Dorsolateral prefrontal cortex (tissue), 120 donors: ENCODE measurements at regions of chrX and their contacts with region 1.

Region 1: DNA sequence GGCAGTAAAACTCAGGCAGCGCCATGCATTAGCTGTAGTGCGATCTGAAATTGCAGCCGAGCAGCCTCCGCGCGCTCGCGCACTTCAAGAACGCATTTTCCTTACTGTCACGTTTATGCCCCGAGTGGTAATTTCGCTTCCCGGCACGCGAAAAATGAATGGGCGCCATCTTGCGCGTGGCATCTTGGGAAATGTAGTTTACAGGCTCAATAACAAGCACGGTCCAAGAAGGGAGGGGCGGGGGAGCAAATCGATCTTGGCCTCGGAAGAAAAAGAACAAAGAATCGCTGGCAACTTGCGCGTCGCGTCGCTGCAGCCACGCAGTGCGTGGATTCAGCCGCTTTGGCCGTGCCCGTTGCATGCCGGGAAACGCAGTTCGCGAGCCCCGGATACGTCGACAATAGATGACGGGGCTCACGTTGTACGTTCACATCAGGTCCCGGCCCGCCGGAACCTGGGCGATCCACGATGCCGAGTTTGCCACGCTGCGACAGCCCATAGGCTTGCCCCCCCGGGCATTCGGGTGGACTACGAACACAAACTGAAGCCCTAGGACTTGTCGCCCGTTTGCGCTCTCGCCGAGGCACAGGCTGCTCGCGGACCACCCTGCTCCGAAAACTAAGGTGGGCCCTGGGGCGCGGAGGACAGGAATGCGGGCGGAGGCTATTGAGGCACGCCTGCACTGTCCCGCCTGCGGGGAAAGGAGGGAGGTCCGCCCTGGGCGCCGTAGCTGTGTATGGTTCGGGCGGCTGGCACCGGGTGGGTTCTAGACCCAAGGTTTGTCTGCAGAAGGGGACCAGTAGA is at the start of gene FTSJ1:
- DNase-seq: peak; percentile 84 to 95 (median 92)
- H3K4me3 ChIP-seq: peak within 1 kb of the TSS; percentile 36 to 85 (median 75)
- H3K27ac ChIP-seq: peak within 1 kb of the TSS in 55 of 59 donors; percentile 36 to 91 (median 76)
- H3K27me3 ChIP-seq: peaks cover 0 to 27% (median 0%) of the 10 kb centered on the region in 45 donors
- CTCF ChIP-seq: peak in 19 of 56 donors; percentile 14 to 49 (median 25)
- total RNA-seq, gene FTSJ1: 18.1 to 39.2 (median 27.8) TPM

Region 2: GRCh38 chrX:47836164-47837072 is 639.6 kb before region 1 on chrX and contains the start of gene ZNF81:
- intact Hi-C with region 1: loop called in 1 of 2 experiments (anchors 10 kb)
- DNase-seq: peak; percentile 86 to 94 (median 92)
- H3K4me3 ChIP-seq: peak within 1 kb of the TSS; percentile 26 to 76 (median 60)
- H3K27ac ChIP-seq: peak within 1 kb of the TSS in 55 of 59 donors; percentile 5 to 85 (median 70)
- H3K27me3 ChIP-seq: peaks cover 0 to 44% (median 0%) of the 10 kb centered on the region in 45 donors
- CTCF ChIP-seq: peak in 8 of 56 donors; percentile 3 to 31 (median 15)
- total RNA-seq, gene ZNF81: 13.5 to 35.3 (median 21.3) TPM

Region 3: GRCh38 chrX:48083212-48083611 is 392.8 kb before region 1 on chrX:
- intact Hi-C with region 1: loop called in 1 of 2 experiments (anchors 5 kb)
- DNase-seq: peak in 4 of 10 donors; percentile 15 to 54 (median 47)
- H3K4me3 ChIP-seq: no peak overlapping the region
- H3K27ac ChIP-seq: no peak overlapping the region
- H3K27me3 ChIP-seq: peaks cover 0 to 62% (median 4%) of the 10 kb centered on the region in 45 donors
- CTCF ChIP-seq: peak in 54 of 56 donors; percentile 18 to 67 (median 51)

Region 4: GRCh38 chrX:48521353-48522243 is 45.6 kb after region 1 on chrX and contains the start of gene EBP:
- intact Hi-C with region 1: no loop called
- DNase-seq: peak; percentile 76 to 94 (median 88)
- H3K4me3 ChIP-seq: peak within 1 kb of the TSS; percentile 30 to 73 (median 60)
- H3K27ac ChIP-seq: peak within 1 kb of the TSS in 48 of 59 donors; percentile 18 to 86 (median 63)
- H3K27me3 ChIP-seq: peaks cover 0 to 28% (median 4%) of the 10 kb centered on the region in 45 donors
- CTCF ChIP-seq: peak in 3 of 56 donors; percentile 3 to 12 (median 6)
- total RNA-seq, gene EBP: 13.5 to 43.9 (median 25.0) TPM

Region 5: GRCh38 chrX:48539345-48540027 is 63.5 kb after region 1 on chrX and contains the start of gene TBC1D25:
- intact Hi-C with region 1: loop called in 1 of 2 experiments (anchors 1 kb)
- DNase-seq: peak; percentile 85 to 97 (median 94)
- H3K4me3 ChIP-seq: peak within 1 kb of the TSS; percentile 34 to 84 (median 69)
- H3K27ac ChIP-seq: peak within 1 kb of the TSS in 58 of 59 donors; percentile 65 to 96 (median 88)
- H3K27me3 ChIP-seq: peaks cover 0 to 26% (median 0%) of the 10 kb centered on the region in 45 donors
- CTCF ChIP-seq: peak in 50 of 56 donors; percentile 13 to 68 (median 50)
- total RNA-seq, gene TBC1D25: 15.0 to 35.0 (median 22.4) TPM

Region 6: GRCh38 chrX:48676106-48676892 is 200.3 kb after region 1 on chrX:
- intact Hi-C with region 1: no loop called
- DNase-seq: peak; percentile 70 to 90 (median 81)
- H3K4me3 ChIP-seq: peak overlapping the region; percentile 40 to 85 (median 71)
- H3K27ac ChIP-seq: peak overlapping the region in 56 of 59 donors; percentile 16 to 88 (median 81)
- H3K27me3 ChIP-seq: peaks cover 0 to 67% (median 9%) of the 10 kb centered on the region in 45 donors
- CTCF ChIP-seq: peak in 6 of 56 donors; percentile 7 to 28 (median 16)

Region 7: DNA sequence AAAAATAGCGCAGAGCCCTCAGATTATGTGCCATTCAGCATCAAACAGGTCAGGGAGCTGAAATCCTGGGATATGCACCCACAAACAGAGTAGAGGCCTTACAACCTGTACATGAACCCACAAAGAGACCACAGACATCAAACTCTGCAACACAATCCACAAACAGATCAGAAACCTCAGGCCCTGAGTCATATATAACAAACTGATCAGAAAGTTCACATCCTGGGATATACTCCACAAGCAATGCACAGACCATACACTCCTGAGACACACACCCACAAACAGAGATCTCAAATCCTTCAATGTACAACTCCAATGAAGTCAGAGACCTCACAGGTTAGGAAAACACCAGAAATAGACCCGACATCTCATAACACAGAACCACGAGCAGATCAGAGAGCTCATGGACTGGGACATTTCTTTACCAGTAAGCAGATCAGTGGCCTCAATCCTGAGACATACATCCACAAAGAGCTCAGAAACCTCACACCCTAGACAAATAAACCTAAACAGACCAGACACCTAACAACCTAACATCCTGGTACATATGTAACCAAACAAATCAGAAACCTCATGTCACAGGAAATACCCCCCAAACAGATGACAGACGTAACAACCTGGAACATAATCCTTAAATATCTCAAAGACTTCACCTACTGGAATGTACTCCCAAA is 244.7 kb after region 1 on chrX:
- intact Hi-C with region 1: no loop called
- DNase-seq: no peak
- H3K4me3 ChIP-seq: no peak overlapping the region
- H3K27ac ChIP-seq: no peak overlapping the region
- H3K27me3 ChIP-seq: peaks cover 0 to 41% (median 3%) of the 10 kb centered on the region in 45 donors
- CTCF ChIP-seq: no peak